ENCODE measurements at regions of chr2 and their contacts with region 1.

Region 1: DNA sequence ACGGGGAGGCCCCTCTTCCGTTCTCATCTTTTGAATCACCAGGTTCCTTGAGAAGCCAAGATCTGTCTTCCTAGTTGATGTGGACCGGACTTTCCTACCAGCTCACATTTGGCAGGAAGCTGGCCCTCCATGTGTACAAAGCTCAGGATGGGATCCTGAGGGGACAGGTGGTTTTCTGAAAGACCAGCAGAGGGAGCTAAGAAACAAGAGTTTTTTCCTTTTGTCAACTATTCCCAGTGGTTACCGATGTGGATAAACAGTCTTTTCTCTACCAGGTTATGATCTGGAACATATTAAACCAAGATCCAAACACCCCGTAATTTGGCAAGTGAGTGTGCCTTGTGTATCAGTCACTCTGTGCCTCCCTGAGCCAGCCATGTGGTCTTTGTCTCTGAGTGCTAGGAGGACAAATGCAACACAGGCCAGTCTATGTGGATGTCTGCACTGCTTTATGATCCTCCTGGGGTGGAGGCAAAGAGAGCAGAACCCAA is 25.1 kb upstream of the ARHGAP25 start:
- DNase-seq: no peak
- ATAC-seq: peak; percentile 78
- H3K4me3 ChIP-seq: no peak overlapping the region
- H3K27ac ChIP-seq: no peak overlapping the region
- H3K4me1 ChIP-seq: peaks cover 5% of the 10 kb centered on the region; the same call in 1 of the 2 replicates
- H3K27me3 ChIP-seq: no peaks in the 10 kb centered on the region; a peak in 2 of 4 replicates
- CTCF ChIP-seq: peak; percentile 61 to 66 (median 61)
- EP300 ChIP-seq: no peak
- POLR2A ChIP-seq: no peak
- RAD21 ChIP-seq: peak; percentile 63

Region 2: GRCh38 chr2:68698567-68699377 is 10.7 kb before region 1 on chr2:
- CTCF ChIA-PET with region 1: interaction called, 24 read pairs
- POLR2A ChIA-PET with region 1: no interaction called
- RAD21 ChIA-PET with region 1: no interaction called
- SMC1A ChIA-PET with region 1: interaction called, 7 read pairs
- in situ Hi-C with region 1: no loop called
- intact Hi-C with region 1: no loop called
- DNase-seq: no peak
- ATAC-seq: no peak
- H3K4me3 ChIP-seq: no peak overlapping the region
- H3K27ac ChIP-seq: no peak overlapping the region
- H3K4me1 ChIP-seq: no peaks in the 10 kb centered on the region
- H3K27me3 ChIP-seq: no peaks in the 10 kb centered on the region
- CTCF ChIP-seq: no peak
- EP300 ChIP-seq: no peak
- POLR2A ChIP-seq: no peak
- RAD21 ChIP-seq: no peak

Region 3: DNA sequence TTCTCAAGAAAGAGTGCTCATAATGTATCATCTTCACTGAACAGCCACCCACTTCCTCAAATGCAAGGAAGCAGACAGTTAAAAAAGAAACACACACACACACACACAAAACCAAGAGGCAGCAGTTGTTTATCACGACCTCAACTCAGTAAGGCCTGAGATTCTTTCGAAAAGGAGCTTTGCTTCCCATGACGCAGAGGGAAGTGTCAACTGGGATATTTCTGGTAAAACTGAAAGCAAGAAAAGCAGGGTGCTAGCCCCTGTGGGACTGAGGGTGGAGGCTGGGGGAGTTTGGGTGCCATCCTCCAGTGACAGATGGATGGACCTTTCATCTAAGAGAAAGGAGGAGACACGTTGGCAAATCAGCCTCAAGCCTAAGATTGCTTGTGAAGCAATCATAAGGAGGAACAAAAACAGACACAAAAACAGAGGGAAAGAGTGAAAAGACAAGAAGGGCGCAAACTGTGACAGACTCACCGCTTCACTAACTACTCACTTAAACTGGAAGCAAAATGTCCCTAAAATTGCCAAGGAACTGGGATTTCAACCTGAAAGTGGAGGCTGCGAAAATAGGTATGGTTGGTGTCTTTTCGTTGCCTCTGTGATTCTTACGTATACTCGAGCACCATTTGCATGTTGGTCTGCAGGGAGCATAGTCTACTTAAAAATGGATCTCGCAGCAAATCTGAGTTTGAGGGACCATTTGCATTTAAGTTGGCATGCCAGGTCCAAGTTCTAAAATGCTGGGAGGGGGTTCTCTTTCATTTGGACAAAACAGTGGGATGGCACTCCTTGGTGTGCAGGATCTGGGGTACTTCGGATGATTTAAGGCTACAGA is 25.4 kb after region 1 on chr2 and contains the start of gene ARHGAP25:
- CTCF ChIA-PET with region 1: interaction called, 10 read pairs
- POLR2A ChIA-PET with region 1: no interaction called
- RAD21 ChIA-PET with region 1: interaction called, 4 read pairs
- SMC1A ChIA-PET with region 1: interaction called, 4 read pairs
- in situ Hi-C with region 1: no loop called
- intact Hi-C with region 1: no loop called
- DNase-seq: peak; percentile 69
- ATAC-seq: peak; percentile 80
- H3K4me3 ChIP-seq: peak within 1 kb of the TSS; percentile 37
- H3K27ac ChIP-seq: peak within 1 kb of the TSS; percentile 47
- H3K4me1 ChIP-seq: peaks cover 43% of the 10 kb centered on the region
- H3K27me3 ChIP-seq: no peaks in the 10 kb centered on the region
- CTCF ChIP-seq: no peak
- EP300 ChIP-seq: no peak; a peak in 1 of 4 replicates
- POLR2A ChIP-seq: no peak; the same call in 1 of the 2 replicates
- RAD21 ChIP-seq: no peak
- polyA plus RNA-seq, gene ARHGAP25: 0.40 to 0.42 TPM

Region 4: DNA sequence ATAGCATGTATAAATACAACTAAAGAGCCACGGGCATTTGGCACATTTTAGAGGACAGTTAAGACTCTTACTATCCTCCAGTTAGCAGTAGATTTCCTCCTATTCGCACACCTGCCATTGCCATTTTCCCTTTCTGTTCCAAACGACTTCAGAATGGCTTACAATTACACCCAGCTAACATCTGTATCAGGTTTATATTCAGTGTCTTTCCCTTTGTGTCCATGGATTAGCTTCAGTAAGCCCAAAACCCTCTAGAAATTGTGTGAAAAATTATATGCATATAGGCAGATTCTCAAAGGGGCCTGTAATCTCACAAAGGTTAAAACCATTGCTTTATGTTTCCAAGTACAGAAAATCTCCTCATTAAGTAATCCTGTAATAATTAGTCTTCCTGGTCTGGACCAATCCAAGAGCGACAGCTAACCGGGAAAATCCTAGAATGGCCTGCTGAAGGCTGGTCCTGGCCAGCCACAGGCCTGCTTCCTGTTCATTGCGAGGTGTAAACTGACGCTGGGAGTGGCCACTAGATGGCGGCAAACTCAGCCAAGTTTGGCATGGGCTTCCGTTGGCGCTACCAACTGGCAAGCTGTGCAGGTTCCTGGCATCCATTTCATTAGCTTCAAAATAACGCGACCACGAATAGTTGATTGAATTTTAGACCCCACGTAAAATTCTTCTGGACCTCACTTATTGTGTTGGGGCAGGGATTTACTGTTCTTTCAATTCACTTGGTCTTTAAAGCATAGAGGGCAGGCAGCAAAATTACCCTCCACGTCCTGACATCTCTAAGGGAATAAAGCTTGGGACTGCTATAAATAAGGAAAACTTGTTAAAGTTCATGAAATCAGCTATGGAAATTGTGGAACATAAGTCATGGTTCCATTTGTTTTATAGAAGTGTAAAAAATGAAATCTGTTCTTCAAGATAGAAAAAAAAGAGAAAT is 42.2 kb after region 1 on chr2:
- CTCF ChIA-PET with region 1: interaction called, 13 read pairs
- POLR2A ChIA-PET with region 1: no interaction called
- RAD21 ChIA-PET with region 1: interaction called, 3 read pairs
- SMC1A ChIA-PET with region 1: interaction called, 9 read pairs
- in situ Hi-C with region 1: no loop called
- intact Hi-C with region 1: no loop called
- DNase-seq: no peak
- ATAC-seq: peak; percentile 99
- H3K4me3 ChIP-seq: no peak overlapping the region
- H3K27ac ChIP-seq: no peak overlapping the region
- H3K4me1 ChIP-seq: no peaks in the 10 kb centered on the region
- H3K27me3 ChIP-seq: peaks cover 0 to 1% of the 10 kb centered on the region in 2 experiments; a peak in 2 of 4 replicates
- CTCF ChIP-seq: peak; percentile 90 to 94 (median 92)
- EP300 ChIP-seq: no peak
- POLR2A ChIP-seq: no peak
- RAD21 ChIP-seq: peak; percentile 89

Region 5: GRCh38 chr2:68909793-68910674 is 200.6 kb after region 1 on chr2:
- CTCF ChIA-PET with region 1: interaction called, 17 read pairs
- POLR2A ChIA-PET with region 1: no interaction called
- RAD21 ChIA-PET with region 1: interaction called, 7 read pairs
- SMC1A ChIA-PET with region 1: interaction called, 9 read pairs
- in situ Hi-C with region 1: no loop called
- intact Hi-C with region 1: loop called (anchors 1 kb)
- DNase-seq: peak; percentile 40
- ATAC-seq: peak; percentile 89
- H3K4me3 ChIP-seq: no peak overlapping the region
- H3K27ac ChIP-seq: no peak overlapping the region
- H3K4me1 ChIP-seq: peaks cover 16% of the 10 kb centered on the region
- H3K27me3 ChIP-seq: no peaks in the 10 kb centered on the region; a peak in 1 of 4 replicates
- CTCF ChIP-seq: peak; percentile 84 to 94 (median 90)
- EP300 ChIP-seq: no peak
- POLR2A ChIP-seq: no peak
- RAD21 ChIP-seq: peak; percentile 97

Region 6: GRCh38 chr2:68925295-68925896 is 215.9 kb after region 1 on chr2:
- CTCF ChIA-PET with region 1: interaction called, 23 read pairs
- POLR2A ChIA-PET with region 1: no interaction called
- RAD21 ChIA-PET with region 1: interaction called, 6 read pairs
- SMC1A ChIA-PET with region 1: interaction called, 10 read pairs
- in situ Hi-C with region 1: loop called (anchors 5 kb)
- intact Hi-C with region 1: loop called (anchors 2 kb)
- DNase-seq: peak; percentile 12
- ATAC-seq: peak; percentile 83
- H3K4me3 ChIP-seq: no peak overlapping the region
- H3K27ac ChIP-seq: no peak overlapping the region
- H3K4me1 ChIP-seq: no peaks in the 10 kb centered on the region
- H3K27me3 ChIP-seq: peaks cover 0 to 2% of the 10 kb centered on the region in 2 experiments; a peak in 3 of 4 replicates
- CTCF ChIP-seq: peak; percentile 87 to 96 (median 91)
- EP300 ChIP-seq: no peak
- POLR2A ChIP-seq: no peak
- RAD21 ChIP-seq: peak; percentile 90

Measured in GM12878 (cell line).